Prostate gland (tissue), 2 donors: ENCODE measurements at regions of chr17 and their contacts with region 1.

Region 1: GRCh38 chr17:58006924-58007780 is at the start of gene SRSF1:
- DNase-seq: peak; percentile 96
- H3K4me3 ChIP-seq: peak within 1 kb of the TSS; percentile 82 to 98
- H3K27ac ChIP-seq: peak within 1 kb of the TSS; percentile 99
- H3K4me1 ChIP-seq: peaks cover 24% of the 10 kb centered on the region
- H3K27me3 ChIP-seq: no peaks in the 10 kb centered on the region
- CTCF ChIP-seq: peak in 1 of 4 experiments; percentile 21
- POLR2A ChIP-seq: peak; percentile 92
- total RNA-seq, gene SRSF1: 136 to 151 TPM

Region 2: DNA sequence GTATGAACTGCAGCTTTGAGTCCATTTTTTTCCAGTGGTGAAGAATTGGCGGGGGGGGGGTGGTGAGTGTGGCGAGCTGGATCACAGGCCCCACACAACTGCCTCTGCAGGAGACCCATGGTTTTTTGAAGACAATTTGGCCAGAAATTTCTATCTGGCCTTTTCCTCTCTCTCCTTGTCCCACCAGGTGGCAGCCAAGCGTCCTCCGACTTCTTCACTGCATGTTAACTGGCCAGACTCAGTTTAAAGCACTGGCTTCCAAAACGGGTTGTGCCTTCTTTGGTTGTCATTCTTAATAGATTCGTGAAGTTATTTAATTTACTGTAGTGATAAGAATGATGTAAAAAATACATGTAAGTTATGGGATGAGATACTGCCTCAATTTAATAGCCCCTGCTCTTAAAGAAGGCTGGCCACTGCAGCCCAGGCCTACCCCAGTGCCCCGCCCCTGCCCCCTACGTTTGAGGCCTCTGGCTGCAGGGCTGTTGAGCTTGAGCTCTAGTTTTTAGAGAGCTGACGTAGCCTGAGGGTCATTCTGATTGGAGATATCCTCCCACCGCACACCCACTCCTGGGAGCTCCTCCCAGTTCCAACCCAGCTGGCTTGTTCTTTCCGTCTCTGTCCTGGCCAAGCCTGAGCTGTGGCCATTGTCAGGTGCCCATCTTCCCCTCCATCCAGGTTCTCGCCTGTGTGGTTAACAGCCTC is 885.7 kb before region 1 on chr17:
- intact Hi-C with region 1: loop called (anchors 10 kb)
- DNase-seq: no peak
- H3K4me3 ChIP-seq: no peak overlapping the region
- H3K27ac ChIP-seq: peak overlapping the region in 1 of 2 donors; percentile 63
- H3K4me1 ChIP-seq: no peaks in the 10 kb centered on the region
- H3K27me3 ChIP-seq: no peaks in the 10 kb centered on the region
- CTCF ChIP-seq: peak in 2 of 4 experiments; percentile 46 to 52
- POLR2A ChIP-seq: no peak

Region 3: DNA sequence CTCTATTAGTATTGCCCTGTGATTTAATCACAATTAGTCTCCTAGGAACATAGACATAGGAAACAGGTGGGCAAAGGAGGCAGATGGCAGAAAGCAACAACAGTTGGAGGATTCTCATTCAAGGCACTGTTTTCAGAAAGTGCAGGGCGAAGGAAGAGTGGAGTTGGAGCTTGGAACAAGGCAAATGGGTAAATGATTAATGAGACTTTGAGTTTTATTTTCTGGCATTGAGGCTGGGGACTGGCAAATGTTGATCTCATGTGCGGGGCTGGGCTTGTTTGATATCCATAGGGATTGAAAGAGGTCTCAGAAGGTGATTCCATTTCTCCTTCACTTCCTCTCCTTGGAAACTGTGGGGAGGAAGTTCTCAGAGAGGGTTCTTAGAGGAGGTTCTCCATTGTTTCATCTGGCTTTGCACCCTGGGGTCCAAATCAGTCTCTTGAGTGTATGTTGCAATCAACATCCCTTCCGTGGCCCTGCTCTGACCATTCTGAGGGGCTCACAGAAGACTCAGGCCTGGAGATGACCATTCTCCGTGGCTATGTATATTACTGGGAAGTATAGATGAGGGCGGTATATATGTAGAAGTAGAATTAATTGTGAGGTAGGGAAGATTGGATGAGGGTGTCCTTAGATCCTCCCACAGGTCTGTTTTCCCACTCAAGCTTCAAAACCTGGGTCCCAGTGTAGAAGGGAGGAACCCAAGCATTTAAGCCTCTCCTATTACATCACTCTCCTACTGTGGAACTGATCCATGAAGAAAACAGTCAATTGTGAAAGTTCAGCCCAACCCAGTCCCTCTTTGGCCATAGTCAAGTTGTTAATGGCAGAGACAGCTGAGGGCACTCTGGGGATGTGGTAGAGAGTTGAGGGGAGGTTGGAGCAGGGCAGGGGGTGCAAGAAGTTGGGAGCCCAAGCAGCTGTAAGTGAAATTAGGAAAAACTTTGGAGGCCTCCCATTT is 36.3 kb after region 1 on chr17:
- intact Hi-C with region 1: no loop called
- DNase-seq: no peak
- H3K4me3 ChIP-seq: no peak overlapping the region
- H3K27ac ChIP-seq: no peak overlapping the region
- H3K4me1 ChIP-seq: no peaks in the 10 kb centered on the region
- H3K27me3 ChIP-seq: no peaks in the 10 kb centered on the region
- CTCF ChIP-seq: no peak
- POLR2A ChIP-seq: no peak

Region 4: GRCh38 chr17:58082870-58083490 is 75.8 kb after region 1 on chr17 and contains the start of gene DYNLL2:
- intact Hi-C with region 1: loop called (anchors 2 kb)
- DNase-seq: peak; percentile 86
- H3K4me3 ChIP-seq: peak within 1 kb of the TSS; percentile 99
- H3K27ac ChIP-seq: peak within 1 kb of the TSS; percentile 90 to 91
- H3K4me1 ChIP-seq: peaks cover 21% of the 10 kb centered on the region
- H3K27me3 ChIP-seq: no peaks in the 10 kb centered on the region
- CTCF ChIP-seq: no peak
- POLR2A ChIP-seq: no peak
- total RNA-seq, gene DYNLL2: 29.9 to 33.0 TPM

Region 5: GRCh38 chr17:58112970-58113631 is 105.9 kb after region 1 on chr17:
- intact Hi-C with region 1: loop called (anchors 10 kb)
- DNase-seq: peak; percentile 80
- H3K4me3 ChIP-seq: no peak overlapping the region
- H3K27ac ChIP-seq: no peak overlapping the region
- H3K4me1 ChIP-seq: no peaks in the 10 kb centered on the region
- H3K27me3 ChIP-seq: no peaks in the 10 kb centered on the region
- CTCF ChIP-seq: peak; percentile 82 to 94 (median 91)
- POLR2A ChIP-seq: no peak